ENCODE measurements at regions of chr9 and their contacts with region 1.

Region 1: DNA sequence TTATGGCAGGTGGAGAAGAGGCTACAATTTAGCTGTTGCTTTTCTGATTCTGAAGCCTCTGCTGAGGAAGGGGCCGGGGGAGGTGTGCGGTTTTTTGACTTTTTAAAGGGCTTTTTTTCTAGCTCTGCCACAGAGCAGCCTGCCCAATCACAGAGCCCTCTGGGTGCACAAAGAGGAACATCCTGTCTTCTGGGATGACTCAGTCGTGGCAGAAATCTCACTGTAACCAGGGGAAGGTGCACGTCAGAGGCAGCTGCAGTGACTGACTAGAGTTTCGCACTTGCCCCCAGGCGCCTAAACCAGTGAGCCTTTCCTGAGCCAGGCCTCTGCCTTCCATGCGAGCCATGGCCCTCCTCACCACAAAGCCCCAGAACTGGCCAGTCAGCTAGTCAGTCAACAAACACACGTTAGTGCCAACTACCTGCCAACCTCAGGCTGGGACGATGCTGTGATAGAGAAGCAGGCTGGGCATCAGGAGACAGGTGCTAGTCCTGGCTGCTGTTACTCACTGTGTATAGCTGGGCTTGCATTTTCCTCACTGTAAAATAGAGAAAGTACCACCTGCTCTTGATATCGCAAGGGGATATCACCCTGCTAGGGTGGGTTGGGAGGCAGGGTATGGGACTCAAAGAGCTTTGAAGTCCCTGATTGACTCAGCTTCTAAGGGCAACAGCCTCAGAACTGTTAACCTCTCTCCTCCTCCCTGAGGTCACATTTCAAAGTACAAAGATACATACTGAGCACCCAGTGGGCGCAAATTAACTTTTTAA is 2.2 kb downstream of the AKNA start:
- DNase-seq: peak; percentile 90 to 91
- ATAC-seq: peak; percentile 60
- H3K4me3 ChIP-seq: no peak overlapping the region
- H3K27ac ChIP-seq: peak overlapping the region; percentile 48 to 81
- H3K4me1 ChIP-seq: no peaks in the 10 kb centered on the region
- H3K27me3 ChIP-seq: no peaks in the 10 kb centered on the region

Region 2: GRCh38 chr9:114348906-114349482 is 36.6 kb before region 1 on chr9:
- intact Hi-C with region 1: loop called in 1 of 2 experiments (anchors 5 kb)
- DNase-seq: peak; percentile 92 to 94
- ATAC-seq: peak; percentile 82
- H3K4me3 ChIP-seq: no peak overlapping the region
- H3K27ac ChIP-seq: peak overlapping the region in 1 of 2 donors; percentile 31
- H3K4me1 ChIP-seq: no peaks in the 10 kb centered on the region
- H3K27me3 ChIP-seq: no peaks in the 10 kb centered on the region

Region 3: GRCh38 chr9:114446036-114446435 is 60.4 kb after region 1 on chr9:
- intact Hi-C with region 1: no loop called
- DNase-seq: no peak
- ATAC-seq: no peak
- H3K4me3 ChIP-seq: no peak overlapping the region
- H3K27ac ChIP-seq: no peak overlapping the region
- H3K4me1 ChIP-seq: no peaks in the 10 kb centered on the region
- H3K27me3 ChIP-seq: no peaks in the 10 kb centered on the region

Measured in aorta (tissue), 5 donors.